Endothelial cell of umbilical vein (primary cell): ENCODE measurements at regions of chr1 and their contacts with region 1.

Region 1: DNA sequence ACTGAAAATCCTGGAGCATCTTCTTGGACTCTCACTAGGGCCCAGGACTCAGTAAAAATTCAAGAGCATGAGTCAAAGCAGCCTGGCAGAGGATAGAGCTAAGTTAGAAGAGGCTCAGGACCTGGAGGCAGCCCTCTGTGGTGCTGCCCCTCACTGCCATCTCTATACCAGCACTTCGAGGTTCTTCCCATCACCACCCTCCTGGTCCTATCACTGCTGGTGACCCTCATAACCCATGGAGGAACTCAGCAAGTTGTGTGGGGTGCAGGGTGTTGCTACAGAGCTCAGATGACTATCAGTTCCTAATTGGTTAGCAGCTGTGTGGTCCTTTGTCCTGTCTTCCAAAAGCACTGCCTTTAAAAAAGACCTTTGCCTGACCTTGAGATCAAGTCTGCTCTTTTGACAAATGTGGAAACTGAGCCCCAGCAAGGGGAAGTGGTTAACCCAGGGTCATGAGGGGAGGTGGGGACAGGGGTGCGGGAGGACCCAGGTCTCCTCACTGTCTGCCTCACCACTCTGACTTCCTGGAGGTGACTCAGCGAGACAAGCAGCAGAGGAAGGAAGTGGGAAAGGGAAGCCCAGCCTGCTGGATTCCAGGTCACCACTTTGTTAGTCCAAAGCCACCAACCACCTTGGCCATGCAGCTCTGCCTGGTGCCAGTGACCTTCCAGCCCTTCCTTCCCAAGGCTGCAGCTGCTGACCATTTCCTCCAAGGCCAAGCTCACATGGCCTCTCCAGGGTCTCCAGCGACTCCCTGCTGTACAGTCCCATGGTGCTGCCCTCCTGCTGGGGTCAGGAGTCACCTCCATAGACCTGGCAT is 199.4 kb upstream of the EDN2 start:
- DNase-seq: peak; percentile 44
- H3K4me3 ChIP-seq: no peak overlapping the region
- H3K27ac ChIP-seq: no peak overlapping the region
- H3K4me1 ChIP-seq: peaks cover 16% of the 10 kb centered on the region
- H3K27me3 ChIP-seq: no peaks in the 10 kb centered on the region
- CTCF ChIP-seq: no peak
- POLR2A ChIP-seq: no peak

Region 2: GRCh38 chr1:41662061-41662764 is 21.7 kb before region 1 on chr1:
- CTCF ChIA-PET with region 1: interaction called, 4 read pairs
- POLR2A ChIA-PET with region 1: no interaction called
- dilution Hi-C with region 1: no loop called
- intact Hi-C with region 1: loop called (anchors 1 kb)
- DNase-seq: peak; percentile 43
- H3K4me3 ChIP-seq: peak overlapping the region in 2 of 3 experiments; percentile 46 to 49
- H3K27ac ChIP-seq: no peak overlapping the region
- H3K4me1 ChIP-seq: peaks cover 7% of the 10 kb centered on the region
- H3K27me3 ChIP-seq: peaks cover 0 to 6% of the 10 kb centered on the region in 2 experiments
- CTCF ChIP-seq: no peak
- POLR2A ChIP-seq: no peak

Region 3: GRCh38 chr1:41673378-41673777 is 10.5 kb before region 1 on chr1:
- CTCF ChIA-PET with region 1: interaction called, 13 read pairs
- POLR2A ChIA-PET with region 1: no interaction called
- dilution Hi-C with region 1: no loop called
- intact Hi-C with region 1: no loop called
- DNase-seq: no peak
- H3K4me3 ChIP-seq: no peak overlapping the region
- H3K27ac ChIP-seq: no peak overlapping the region
- H3K4me1 ChIP-seq: no peaks in the 10 kb centered on the region
- H3K27me3 ChIP-seq: no peaks in the 10 kb centered on the region
- CTCF ChIP-seq: no peak
- POLR2A ChIP-seq: no peak

Region 4: GRCh38 chr1:41728403-41729202 is 44.7 kb after region 1 on chr1:
- CTCF ChIA-PET with region 1: no interaction called
- POLR2A ChIA-PET with region 1: no interaction called
- dilution Hi-C with region 1: no loop called
- intact Hi-C with region 1: loop called (anchors 2 kb)
- DNase-seq: no peak
- H3K4me3 ChIP-seq: no peak overlapping the region
- H3K27ac ChIP-seq: no peak overlapping the region
- H3K4me1 ChIP-seq: peaks cover 26% of the 10 kb centered on the region
- H3K27me3 ChIP-seq: no peaks in the 10 kb centered on the region
- CTCF ChIP-seq: no peak
- POLR2A ChIP-seq: no peak